ENCODE measurements at regions of chr6 and their contacts with region 1.

Region 1: GRCh38 chr6:125749173-125749864 is at the start of gene HEY2:
- DNase-seq: peak; percentile 79 to 97
- H3K4me3 ChIP-seq: peak within 1 kb of the TSS; percentile 79 to 81
- H3K27ac ChIP-seq: peak within 1 kb of the TSS; percentile 95 to 99
- H3K4me1 ChIP-seq: peaks cover 0 to 16% of the 10 kb centered on the region in 2 donors
- H3K27me3 ChIP-seq: no peaks in the 10 kb centered on the region
- CTCF ChIP-seq: no peak
- total RNA-seq, gene HEY2: 0.32 TPM

Region 2: GRCh38 chr6:125363039-125363823 is 386.1 kb before region 1 on chr6:
- intact Hi-C with region 1: loop called (anchors 2 kb)
- DNase-seq: peak; percentile 12 to 75
- H3K4me3 ChIP-seq: peak overlapping the region; percentile 68 to 76
- H3K27ac ChIP-seq: peak overlapping the region; percentile 89 to 90
- H3K4me1 ChIP-seq: peaks cover 0 to 25% of the 10 kb centered on the region in 2 donors
- H3K27me3 ChIP-seq: no peaks in the 10 kb centered on the region
- CTCF ChIP-seq: no peak

Region 3: DNA sequence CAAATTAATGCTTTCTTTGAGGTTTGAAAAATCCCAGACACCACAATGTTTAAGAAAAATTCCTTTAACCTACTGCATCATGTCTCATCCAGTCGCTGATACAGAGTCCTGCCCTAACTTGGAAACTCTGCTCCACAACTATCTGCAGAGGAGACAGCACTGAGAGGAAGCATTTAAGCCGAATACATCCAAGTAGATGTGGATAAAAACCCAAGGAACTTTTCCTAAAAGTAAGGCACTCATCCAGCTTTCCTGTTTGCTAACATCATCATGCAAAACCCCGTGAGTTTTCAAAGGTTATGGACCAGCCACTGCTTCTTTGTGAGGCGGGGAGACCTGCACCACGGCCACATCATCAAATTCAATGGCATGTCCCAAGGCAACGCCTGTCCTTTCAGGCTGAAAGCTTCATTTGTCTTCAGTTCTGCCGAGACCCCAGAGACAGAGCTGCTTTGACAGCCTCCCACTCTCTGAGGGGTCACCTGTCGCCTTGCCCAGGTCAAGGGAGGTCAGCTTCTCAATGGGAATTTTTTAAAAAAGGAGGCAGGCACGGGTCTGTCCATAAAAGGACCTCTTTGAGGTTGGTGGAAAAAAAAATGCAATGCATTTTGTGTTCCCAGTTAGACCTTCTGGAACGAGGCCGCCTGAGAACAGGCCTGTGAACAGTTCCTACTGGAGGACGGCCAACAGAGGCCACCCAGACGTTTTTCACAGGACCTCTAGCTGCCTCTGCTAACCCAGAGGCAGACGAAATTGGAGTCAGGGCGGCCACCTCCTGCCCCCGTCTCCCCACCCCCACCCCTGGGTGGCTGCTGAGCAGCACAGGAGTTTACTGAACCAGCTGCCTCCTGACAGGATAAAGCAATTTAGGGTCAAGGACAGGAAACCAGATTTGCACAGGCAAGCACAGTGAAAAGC is 305.1 kb before region 1 on chr6:
- intact Hi-C with region 1: loop called (anchors 5 kb)
- DNase-seq: peak in 1 of 2 donors; percentile 84
- H3K4me3 ChIP-seq: peak overlapping the region; percentile 32 to 51
- H3K27ac ChIP-seq: peak overlapping the region; percentile 87
- H3K4me1 ChIP-seq: peaks cover 0 to 15% of the 10 kb centered on the region in 2 donors
- H3K27me3 ChIP-seq: no peaks in the 10 kb centered on the region
- CTCF ChIP-seq: no peak

Region 4: GRCh38 chr6:125598422-125598821 is 150.9 kb before region 1 on chr6:
- intact Hi-C with region 1: loop called (anchors 5 kb)
- DNase-seq: peak; percentile 60 to 91
- H3K4me3 ChIP-seq: no peak overlapping the region
- H3K27ac ChIP-seq: peak overlapping the region; percentile 64 to 66
- H3K4me1 ChIP-seq: peaks cover 0 to 4% of the 10 kb centered on the region in 2 donors
- H3K27me3 ChIP-seq: no peaks in the 10 kb centered on the region
- CTCF ChIP-seq: no peak

Region 5: DNA sequence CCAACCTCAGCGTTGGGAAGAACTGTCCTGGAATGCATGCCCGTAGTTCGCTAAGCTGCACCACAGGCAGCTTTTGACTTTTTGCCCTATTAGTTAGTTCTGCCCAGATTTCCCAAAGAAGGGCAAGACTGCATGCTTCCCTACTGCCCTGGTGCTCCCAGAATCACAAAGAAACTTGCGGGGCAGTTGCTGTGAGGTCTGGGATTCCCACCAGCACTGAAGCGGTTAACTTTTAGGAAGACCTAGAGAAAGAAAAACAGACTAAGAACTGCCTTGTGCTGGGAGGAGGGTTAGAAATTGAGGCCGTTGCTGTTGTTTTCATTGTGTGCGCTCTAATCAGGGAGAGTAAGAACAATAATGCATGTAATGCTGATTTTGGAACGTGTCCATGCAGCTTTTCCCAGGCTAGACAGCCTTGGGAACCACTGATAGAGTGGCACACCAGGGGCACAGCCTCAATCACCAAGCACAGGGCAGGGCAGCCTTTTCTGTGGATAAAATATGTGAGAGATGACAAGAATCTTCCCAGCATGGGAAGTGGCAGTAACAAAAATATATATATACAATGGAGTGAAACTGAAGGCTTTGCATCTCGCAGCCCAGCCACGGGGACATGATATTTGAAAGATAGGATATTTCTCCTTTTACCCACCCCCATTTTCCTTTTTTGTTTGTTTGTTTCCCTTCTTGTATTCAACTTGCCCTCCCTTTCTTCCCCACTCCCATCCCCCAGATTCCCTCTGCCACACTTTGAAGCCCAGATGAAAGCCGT is 137.6 kb before region 1 on chr6:
- intact Hi-C with region 1: loop called (anchors 5 kb)
- DNase-seq: no peak
- H3K4me3 ChIP-seq: peak overlapping the region; percentile 34 to 59
- H3K27ac ChIP-seq: peak overlapping the region; percentile 62 to 78
- H3K4me1 ChIP-seq: peaks cover 0 to 17% of the 10 kb centered on the region in 2 donors
- H3K27me3 ChIP-seq: no peaks in the 10 kb centered on the region
- CTCF ChIP-seq: no peak

Region 6: GRCh38 chr6:125759184-125759902 is 10.0 kb after region 1 on chr6:
- intact Hi-C with region 1: loop called (anchors 2 kb)
- DNase-seq: peak in 1 of 2 donors; percentile 75
- H3K4me3 ChIP-seq: peak overlapping the region; percentile 4 to 50
- H3K27ac ChIP-seq: peak overlapping the region; percentile 95 to 96
- H3K4me1 ChIP-seq: peaks cover 13 to 68% of the 10 kb centered on the region in 2 donors
- H3K27me3 ChIP-seq: no peaks in the 10 kb centered on the region
- CTCF ChIP-seq: peak; percentile 10 to 40 (median 32)